Activated CD4-positive, alpha-beta T cell treated with anti-CD3 and anti-CD28 coated beads for 36 hours (primary cell): ENCODE measurements at regions of chr10 and their contacts with region 1.

Region 1: DNA sequence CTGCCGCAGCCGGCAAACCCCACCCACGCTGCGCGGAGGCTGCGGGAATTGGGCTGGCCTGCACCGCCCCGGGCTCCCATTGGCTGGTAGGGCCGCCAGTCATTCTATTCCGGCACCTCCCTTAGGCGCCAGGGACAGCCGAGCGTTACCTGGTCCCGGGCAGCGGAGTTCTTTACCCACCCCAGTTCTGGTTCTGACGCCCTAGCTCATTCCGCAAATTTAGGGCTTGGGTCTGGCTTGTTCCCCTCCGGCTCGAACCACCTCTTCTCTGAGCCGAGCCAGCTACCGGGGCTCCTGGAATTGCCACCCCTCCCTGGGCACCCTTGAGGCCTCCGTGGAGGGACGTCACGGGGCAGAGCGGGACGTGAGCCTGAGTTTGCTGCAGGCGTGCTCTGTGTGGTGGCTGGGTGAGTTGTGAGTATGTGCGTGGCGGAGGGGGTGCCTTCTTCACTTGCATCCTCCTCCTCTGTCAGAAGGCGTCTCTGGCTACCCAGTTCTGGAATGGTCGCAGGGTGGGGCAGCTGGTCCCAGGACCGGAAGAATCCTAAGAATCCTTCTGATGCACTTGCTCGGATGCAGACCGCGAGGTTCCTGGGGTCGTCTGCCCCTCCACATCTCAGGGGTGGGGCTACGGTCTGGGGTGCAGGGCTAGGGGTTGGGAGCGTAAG is at the starts of genes PDZD7 and SFXN3:
- DNase-seq: peak; percentile 98
- ATAC-seq: peak; percentile 85
- H3K4me3 Mint-ChIP-seq: peak within 1 kb of the TSS; percentile 80
- H3K27ac Mint-ChIP-seq: peak within 1 kb of the TSS; percentile 82
- H3K4me1 Mint-ChIP-seq: peaks cover 22% of the 10 kb centered on the region
- H3K27me3 Mint-ChIP-seq: no peaks in the 10 kb centered on the region
- total RNA-seq, gene PDZD7: 0.28 to 0.32 TPM
- total RNA-seq, gene SFXN3: 30.0 to 37.7 TPM

Region 2: DNA sequence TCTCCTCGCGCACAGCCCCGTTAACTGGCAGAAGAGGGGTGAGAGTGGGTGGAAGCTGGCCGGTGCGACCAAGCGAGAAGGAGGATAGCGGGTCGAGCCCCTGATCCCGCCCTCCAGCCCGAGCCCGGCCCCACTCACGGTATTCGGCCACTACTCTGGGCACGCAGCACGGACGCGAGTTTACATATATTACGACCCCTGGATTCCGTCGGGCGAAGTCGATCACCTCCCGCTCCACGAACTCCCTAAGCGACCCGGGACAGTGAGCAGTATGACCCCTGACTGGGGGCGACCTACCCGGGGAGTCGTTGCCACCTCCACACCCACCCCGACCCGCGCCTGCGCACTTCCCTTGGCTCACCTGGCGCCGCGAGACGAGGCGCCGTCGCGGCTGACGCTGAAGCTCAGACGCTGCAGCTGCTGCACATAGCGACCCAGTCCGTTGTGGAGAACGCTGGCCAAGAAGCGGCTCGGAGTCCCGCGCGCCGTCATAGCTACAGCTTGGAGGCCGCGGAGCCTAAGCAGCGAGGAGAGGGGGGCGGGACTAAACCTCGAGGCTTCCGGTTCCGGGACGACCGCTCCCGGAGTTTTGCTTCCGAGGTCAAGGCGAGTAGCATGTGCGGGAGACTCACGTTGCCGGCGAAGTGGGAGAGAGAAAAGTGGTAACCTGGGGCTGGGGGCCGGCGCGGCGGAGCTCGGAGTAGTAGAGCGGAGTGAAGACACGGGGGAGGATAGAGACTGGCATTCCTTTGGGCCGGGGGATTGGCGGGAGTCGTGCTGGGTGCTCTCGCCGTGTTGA is 44.1 kb before region 1 on chr10 and contains the starts of genes MRPL43 and TWNK:
- CTCF ChIA-PET with region 1: no interaction called
- POLR2A ChIA-PET with region 1: no interaction called
- intact Hi-C with region 1: loop called (anchors 1 kb)
- DNase-seq: peak; percentile 93
- ATAC-seq: peak; percentile 98
- H3K4me3 Mint-ChIP-seq: peak within 1 kb of the TSS; percentile 100
- H3K27ac Mint-ChIP-seq: peak within 1 kb of the TSS; percentile 94
- H3K4me1 Mint-ChIP-seq: peaks cover 43% of the 10 kb centered on the region
- H3K27me3 Mint-ChIP-seq: no peaks in the 10 kb centered on the region
- total RNA-seq, gene MRPL43: 53.4 to 62.6 TPM
- total RNA-seq, gene TWNK: 13.8 to 17.9 TPM

Region 3: DNA sequence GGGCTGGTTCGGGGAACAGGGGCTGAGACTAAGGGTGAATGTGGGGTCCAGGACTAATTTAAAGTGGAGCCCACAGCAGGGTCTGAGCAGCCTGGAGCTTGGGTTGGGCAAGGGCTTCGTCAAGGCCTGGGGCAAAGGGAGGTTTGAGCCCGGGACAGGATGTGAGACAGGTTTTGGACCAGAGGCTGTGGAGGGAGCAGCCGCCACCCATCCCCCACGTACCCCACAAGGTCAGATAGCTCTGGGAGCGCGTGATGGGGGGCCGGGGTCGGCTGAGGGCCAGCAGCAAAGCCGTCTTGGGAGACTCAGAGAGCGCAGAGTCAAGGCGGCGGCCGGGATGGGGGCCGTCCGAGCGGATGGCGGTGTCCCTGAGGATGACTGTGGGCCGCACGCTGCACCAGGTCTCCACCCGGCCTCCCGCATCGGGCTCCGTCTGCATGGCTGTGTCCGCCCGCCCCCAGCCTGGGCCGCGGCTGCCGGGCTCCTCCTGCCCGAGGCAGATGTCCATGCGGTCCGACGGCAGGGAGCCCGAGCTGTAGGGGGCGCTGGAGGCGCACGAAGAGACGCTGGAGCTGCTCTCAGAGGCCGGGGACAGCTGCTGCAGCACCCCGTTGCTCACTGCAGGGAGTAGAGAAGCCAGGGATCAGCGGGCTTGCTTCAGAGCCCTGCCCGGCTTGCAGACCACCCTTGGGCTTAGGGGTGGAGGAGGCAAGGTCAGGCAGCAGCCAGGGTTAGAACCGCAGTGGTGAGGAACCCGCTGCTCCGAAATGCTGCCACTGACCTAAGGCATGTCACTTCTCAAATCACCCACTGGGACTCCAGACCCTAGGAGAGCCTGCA is 12.4 kb before region 1 on chr10:
- CTCF ChIA-PET with region 1: interaction called, 29 read pairs
- POLR2A ChIA-PET with region 1: no interaction called
- intact Hi-C with region 1: no loop called
- DNase-seq: peak; percentile 93
- ATAC-seq: peak; percentile 87
- H3K4me3 Mint-ChIP-seq: no peak overlapping the region
- H3K27ac Mint-ChIP-seq: no peak overlapping the region
- H3K4me1 Mint-ChIP-seq: peaks cover 12% of the 10 kb centered on the region
- H3K27me3 Mint-ChIP-seq: peaks cover 37% of the 10 kb centered on the region

Region 4: GRCh38 chr10:101060036-101060950 is 29.0 kb after region 1 on chr10:
- CTCF ChIA-PET with region 1: interaction called, 526 read pairs
- POLR2A ChIA-PET with region 1: no interaction called
- intact Hi-C with region 1: loop called (anchors 1 kb)
- DNase-seq: peak; percentile 95
- ATAC-seq: peak; percentile 75
- H3K4me3 Mint-ChIP-seq: peak overlapping the region; percentile 82
- H3K27ac Mint-ChIP-seq: peak overlapping the region; percentile 96
- H3K4me1 Mint-ChIP-seq: peaks cover 22% of the 10 kb centered on the region
- H3K27me3 Mint-ChIP-seq: peaks cover 22% of the 10 kb centered on the region

Region 5: GRCh38 chr10:102055647-102056419 is 1024.6 kb after region 1 on chr10 and contains the start of gene ARMH3:
- CTCF ChIA-PET with region 1: no interaction called
- POLR2A ChIA-PET with region 1: no interaction called
- intact Hi-C with region 1: loop called in 1 of 2 experiments (anchors 1 kb)
- DNase-seq: peak; percentile 96
- ATAC-seq: peak; percentile 98
- H3K4me3 Mint-ChIP-seq: peak within 1 kb of the TSS; percentile 95
- H3K27ac Mint-ChIP-seq: peak within 1 kb of the TSS; percentile 93
- H3K4me1 Mint-ChIP-seq: peaks cover 40% of the 10 kb centered on the region
- H3K27me3 Mint-ChIP-seq: no peaks in the 10 kb centered on the region
- total RNA-seq, gene ARMH3: 16.0 to 21.0 TPM